ENCODE measurements at regions of chr18 and their contacts with region 1.

Region 1: DNA sequence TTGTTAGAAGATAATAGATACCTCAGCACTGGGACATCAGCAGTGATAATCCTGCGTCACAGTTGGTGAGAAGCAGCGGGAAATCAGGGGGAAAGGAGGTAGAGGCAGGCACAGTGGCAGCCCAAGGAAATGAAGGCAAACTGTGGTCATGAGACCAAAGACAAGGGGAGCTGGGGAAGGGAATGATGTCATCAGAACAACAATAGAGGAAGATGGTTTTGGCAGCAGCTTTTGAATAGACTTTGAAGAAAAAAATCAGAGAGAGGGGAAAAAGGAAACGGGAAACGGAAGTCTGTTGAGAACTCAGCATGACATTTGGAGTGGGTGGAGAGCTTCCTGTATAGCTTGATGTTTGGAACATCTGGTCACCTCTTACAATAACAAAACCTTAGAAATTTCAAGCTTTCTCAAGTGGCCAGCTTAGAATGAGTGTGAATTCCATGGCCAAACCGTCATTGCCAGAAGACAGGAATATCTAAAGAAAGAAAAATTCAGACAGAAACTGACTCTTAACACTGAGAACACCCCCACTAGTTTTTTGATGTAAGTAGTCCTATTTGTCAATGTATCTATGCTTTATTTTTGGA is 18.4 kb upstream of the YES1 start:
- DNase-seq: no peak
- H3K4me3 ChIP-seq: no peak overlapping the region
- CTCF ChIP-seq: no peak

Region 2: DNA sequence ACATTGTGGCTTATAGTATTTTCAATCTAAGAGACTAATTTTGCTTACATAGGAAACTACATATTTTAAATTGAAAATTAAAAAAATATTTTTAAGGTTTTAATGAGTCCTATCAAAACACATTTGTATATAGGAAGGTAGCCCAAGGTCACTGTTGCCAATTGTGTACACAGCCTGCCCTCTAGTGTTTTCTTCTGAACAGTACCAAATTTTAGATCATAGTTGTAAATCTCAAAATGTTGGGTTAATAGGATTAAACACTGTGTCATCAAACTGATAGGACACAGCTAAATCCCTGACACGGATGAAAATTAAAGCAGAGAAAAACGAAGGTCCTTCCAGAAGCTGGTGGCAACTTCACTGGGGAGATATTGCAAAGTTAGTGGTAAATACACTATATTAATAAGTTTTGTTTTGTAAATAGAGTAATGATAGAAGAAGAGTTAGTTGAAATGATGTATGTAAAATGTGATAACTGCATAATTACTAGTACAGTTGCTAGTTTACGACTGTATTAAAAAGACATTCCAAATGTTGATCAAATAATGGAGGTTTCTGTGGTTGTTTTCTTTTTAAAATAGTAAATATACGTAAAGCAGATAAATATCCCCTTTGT is 213.9 kb before region 1 on chr18:
- CTCF ChIA-PET with region 1: interaction called, 448 read pairs
- POLR2A ChIA-PET with region 1: no interaction called
- DNase-seq: no peak
- H3K4me3 ChIP-seq: no peak overlapping the region
- CTCF ChIP-seq: peak; percentile 49

Region 3: GRCh38 chr18:644395-645004 is 185.9 kb before region 1 on chr18:
- CTCF ChIA-PET with region 1: interaction called, 13 read pairs
- POLR2A ChIA-PET with region 1: no interaction called
- DNase-seq: no peak
- H3K4me3 ChIP-seq: no peak overlapping the region
- CTCF ChIP-seq: no peak

Region 4: DNA sequence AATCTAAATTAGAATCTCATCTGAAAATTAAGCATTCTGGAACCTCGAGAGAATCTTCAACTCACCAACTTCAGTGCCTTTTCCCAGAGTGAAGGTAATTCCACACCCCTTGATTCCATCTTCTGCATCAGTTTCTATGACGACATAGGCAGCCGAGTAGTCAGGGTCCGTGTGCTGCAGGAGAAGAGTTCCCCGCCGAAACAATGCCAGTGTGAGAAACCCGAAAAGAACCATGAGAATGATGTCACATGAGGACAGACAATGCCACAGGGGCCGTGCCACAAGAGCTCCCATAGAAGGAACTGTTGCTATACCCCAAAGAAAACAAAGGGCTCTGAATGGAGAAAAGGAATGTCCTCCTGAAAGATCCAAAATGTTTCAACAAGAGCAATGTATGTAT is 124.0 kb before region 1 on chr18:
- CTCF ChIA-PET with region 1: interaction called, 10 read pairs
- POLR2A ChIA-PET with region 1: no interaction called
- DNase-seq: no peak
- H3K4me3 ChIP-seq: no peak overlapping the region
- CTCF ChIP-seq: no peak

Region 5: GRCh38 chr18:741931-742512 is 88.4 kb before region 1 on chr18:
- CTCF ChIA-PET with region 1: interaction called, 259 read pairs
- POLR2A ChIA-PET with region 1: no interaction called
- DNase-seq: peak; percentile 4
- H3K4me3 ChIP-seq: no peak overlapping the region
- CTCF ChIP-seq: peak; percentile 50

Region 6: GRCh38 chr18:801137-801536 is 29.3 kb before region 1 on chr18:
- CTCF ChIA-PET with region 1: interaction called, 13 read pairs
- POLR2A ChIA-PET with region 1: no interaction called
- DNase-seq: no peak
- H3K4me3 ChIP-seq: no peak overlapping the region
- CTCF ChIP-seq: no peak

Region 7: DNA sequence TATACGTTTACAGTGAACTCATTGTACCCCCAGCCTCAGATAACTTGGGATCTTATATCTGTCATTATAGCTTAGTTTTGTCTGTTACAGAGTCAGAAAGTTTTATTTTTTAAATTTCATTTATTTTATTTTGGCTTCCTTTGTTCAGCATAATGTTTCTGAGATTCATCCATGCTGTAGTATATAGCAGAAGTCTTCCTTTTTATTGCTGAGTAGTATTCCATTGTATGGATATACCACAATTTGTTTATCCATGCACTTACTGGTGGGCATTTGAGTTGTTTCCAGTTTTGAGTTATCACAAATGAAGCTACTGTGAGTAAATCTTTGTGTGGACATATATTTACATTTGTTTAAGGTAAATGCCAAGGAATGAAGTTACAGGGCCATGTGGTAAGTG is 196.5 kb after region 1 on chr18:
- CTCF ChIA-PET with region 1: no interaction called
- POLR2A ChIA-PET with region 1: no interaction called
- DNase-seq: no peak
- H3K4me3 ChIP-seq: no peak overlapping the region
- CTCF ChIP-seq: no peak